K562 (cell line): ENCODE measurements at regions of chr1 and their contacts with region 1.

Region 1: GRCh38 chr1:244302889-244303613 is 148.7 kb downstream of the ADSS2 start:
- DNase-seq: peak; percentile 85 to 97 (median 87)
- ATAC-seq: peak; percentile 81
- H3K4me3 ChIP-seq: no peak overlapping the region
- H3K27ac ChIP-seq: peak overlapping the region; percentile 90
- H3K4me1 ChIP-seq: peaks cover 29 to 52% of the 10 kb centered on the region in 2 experiments
- H3K27me3 ChIP-seq: no peaks in the 10 kb centered on the region
- CTCF ChIP-seq: no peak; a peak in 1 of 6 replicates
- EP300 ChIP-seq: peak; percentile 98
- POLR2A ChIP-seq: no peak; the same call in 1 of the 2 replicates
- RAD21 ChIP-seq: peak in 1 of 2 experiments; percentile 36; a peak in 3 of 4 replicates

Region 2: GRCh38 chr1:243819438-243819839 is 483.6 kb before region 1 on chr1:
- CTCF ChIA-PET with region 1: no interaction called
- POLR2A ChIA-PET with region 1: no interaction called
- in situ Hi-C with region 1: no loop called
- intact Hi-C with region 1: no loop called
- DNase-seq: peak in 1 of 4 experiments; percentile 3
- ATAC-seq: no peak
- H3K4me3 ChIP-seq: no peak overlapping the region
- H3K27ac ChIP-seq: no peak overlapping the region
- H3K4me1 ChIP-seq: no peaks in the 10 kb centered on the region
- H3K27me3 ChIP-seq: no peaks in the 10 kb centered on the region
- CTCF ChIP-seq: no peak
- EP300 ChIP-seq: no peak
- POLR2A ChIP-seq: no peak
- RAD21 ChIP-seq: no peak

Region 3: DNA sequence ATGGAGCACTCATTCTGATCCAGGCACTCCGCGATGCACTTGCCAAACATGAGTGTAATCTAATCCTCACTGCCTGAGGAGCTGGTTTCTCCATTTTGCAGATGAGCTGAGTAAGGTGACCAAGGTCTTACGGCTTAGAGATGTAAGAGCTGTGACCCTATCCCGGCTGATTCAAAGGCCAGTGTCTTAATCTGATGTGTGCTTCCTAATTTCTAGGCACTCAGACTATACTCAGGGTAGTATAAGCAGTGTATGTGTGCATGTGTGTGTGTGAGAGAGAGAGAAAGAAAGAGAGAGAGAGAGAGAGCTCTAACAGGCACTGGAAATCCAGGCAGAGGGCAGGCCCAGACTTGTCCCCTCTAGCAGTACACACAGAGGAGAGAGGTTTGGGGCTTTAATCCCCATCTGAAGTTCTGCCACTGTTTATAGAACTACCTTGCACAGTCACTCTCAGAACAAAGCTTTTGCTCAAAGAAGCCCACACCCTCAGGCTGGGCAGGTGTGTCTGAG is 63.7 kb before region 1 on chr1:
- CTCF ChIA-PET with region 1: no interaction called
- POLR2A ChIA-PET with region 1: no interaction called
- in situ Hi-C with region 1: no loop called
- intact Hi-C with region 1: no loop called
- DNase-seq: no peak
- ATAC-seq: no peak
- H3K4me3 ChIP-seq: no peak overlapping the region
- H3K27ac ChIP-seq: no peak overlapping the region
- H3K4me1 ChIP-seq: peaks cover 0 to under 1% of the 10 kb centered on the region in 2 experiments; a peak in 1 of 5 replicates
- H3K27me3 ChIP-seq: peaks cover 29 to 44% of the 10 kb centered on the region in 2 experiments; a peak in 4 of 5 replicates
- CTCF ChIP-seq: no peak
- EP300 ChIP-seq: no peak
- POLR2A ChIP-seq: no peak
- RAD21 ChIP-seq: no peak

Region 4: DNA sequence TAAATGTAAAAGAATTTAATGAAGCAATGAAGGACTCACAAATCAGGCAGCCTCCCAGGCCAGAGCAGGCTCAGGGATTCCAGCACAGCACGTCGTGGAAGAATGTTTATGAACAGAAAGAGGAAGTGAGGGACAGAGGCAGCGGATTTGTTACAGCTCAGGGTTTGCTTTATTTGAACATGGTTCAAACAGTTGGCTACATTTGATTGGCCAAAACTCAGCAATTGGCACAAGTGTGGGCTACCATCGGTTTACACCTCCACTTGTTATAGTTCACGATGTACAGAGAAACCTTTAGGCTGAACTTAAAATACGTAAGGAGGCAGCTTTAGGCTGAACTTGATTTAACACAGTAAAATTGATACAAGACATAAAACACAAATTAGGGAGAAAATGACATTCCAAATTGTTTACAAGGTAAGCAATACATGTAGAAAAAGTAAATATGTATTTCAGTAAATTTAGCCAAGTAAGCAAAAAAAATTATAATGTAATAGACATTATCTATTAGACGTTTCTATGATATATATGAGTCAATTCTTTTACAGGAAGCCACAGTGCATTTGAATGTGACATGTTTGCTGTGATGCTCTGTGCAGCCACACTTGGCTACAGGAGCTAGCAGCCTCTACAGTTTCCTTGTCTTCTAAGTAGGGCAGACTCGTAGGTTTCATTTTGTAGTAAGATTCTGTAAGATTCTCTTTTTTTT is 22.2 kb after region 1 on chr1:
- CTCF ChIA-PET with region 1: no interaction called
- POLR2A ChIA-PET with region 1: interaction called, 5 read pairs
- in situ Hi-C with region 1: no loop called
- intact Hi-C with region 1: loop called (anchors 2 kb)
- DNase-seq: peak in 1 of 4 experiments; percentile 69
- ATAC-seq: peak; percentile 74
- H3K4me3 ChIP-seq: no peak overlapping the region
- H3K27ac ChIP-seq: peak overlapping the region; percentile 42
- H3K4me1 ChIP-seq: peaks cover 3 to 41% of the 10 kb centered on the region in 2 experiments; a peak in 4 of 5 replicates
- H3K27me3 ChIP-seq: no peaks in the 10 kb centered on the region
- CTCF ChIP-seq: no peak
- EP300 ChIP-seq: no peak
- POLR2A ChIP-seq: no peak
- RAD21 ChIP-seq: no peak

Region 5: GRCh38 chr1:244353551-244354091 is 50.6 kb after region 1 on chr1:
- CTCF ChIA-PET with region 1: no interaction called
- POLR2A ChIA-PET with region 1: no interaction called
- in situ Hi-C with region 1: no loop called
- intact Hi-C with region 1: loop called (anchors 2 kb)
- DNase-seq: peak; percentile 73 to 92 (median 80)
- ATAC-seq: peak; percentile 83
- H3K4me3 ChIP-seq: no peak overlapping the region
- H3K27ac ChIP-seq: peak overlapping the region; percentile 71
- H3K4me1 ChIP-seq: peaks cover 20 to 47% of the 10 kb centered on the region in 2 experiments
- H3K27me3 ChIP-seq: no peaks in the 10 kb centered on the region
- CTCF ChIP-seq: no peak
- EP300 ChIP-seq: peak; percentile 75
- POLR2A ChIP-seq: peak; percentile 52
- RAD21 ChIP-seq: peak in 1 of 2 experiments; percentile 32; a peak in 2 of 4 replicates

Region 6: GRCh38 chr1:244371242-244372141 is 68.4 kb after region 1 on chr1:
- CTCF ChIA-PET with region 1: interaction called, 3 read pairs
- POLR2A ChIA-PET with region 1: no interaction called
- in situ Hi-C with region 1: no loop called
- intact Hi-C with region 1: loop called (anchors 1 kb)
- DNase-seq: no peak
- ATAC-seq: no peak
- H3K4me3 ChIP-seq: no peak overlapping the region
- H3K27ac ChIP-seq: no peak overlapping the region
- H3K4me1 ChIP-seq: peaks cover 31 to 41% of the 10 kb centered on the region in 2 experiments
- H3K27me3 ChIP-seq: no peaks in the 10 kb centered on the region
- CTCF ChIP-seq: no peak
- EP300 ChIP-seq: no peak
- POLR2A ChIP-seq: no peak
- RAD21 ChIP-seq: no peak

Region 7: DNA sequence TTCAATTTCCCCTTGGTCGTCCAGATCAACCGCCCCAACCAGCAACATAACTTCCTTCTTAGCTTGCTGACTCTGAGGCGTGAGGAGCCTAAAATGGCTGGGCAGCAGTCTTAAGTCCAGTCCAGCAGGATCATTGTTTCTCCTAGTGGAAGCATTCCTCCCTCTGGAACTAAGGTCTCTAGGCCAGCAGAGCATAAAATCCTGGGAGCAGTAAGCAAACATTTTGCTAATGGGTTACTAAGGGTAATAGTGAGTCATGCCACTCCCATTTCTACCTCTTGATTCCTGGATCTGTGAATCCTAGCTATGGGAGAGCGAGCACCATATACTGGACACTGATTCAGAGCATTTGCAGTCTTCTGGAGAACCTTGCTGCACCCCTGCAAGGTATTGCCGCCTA is 88.7 kb after region 1 on chr1:
- CTCF ChIA-PET with region 1: no interaction called
- POLR2A ChIA-PET with region 1: no interaction called
- in situ Hi-C with region 1: no loop called
- intact Hi-C with region 1: loop called (anchors 1 kb)
- DNase-seq: no peak
- ATAC-seq: no peak
- H3K4me3 ChIP-seq: no peak overlapping the region
- H3K27ac ChIP-seq: no peak overlapping the region
- H3K4me1 ChIP-seq: peaks cover 12 to 17% of the 10 kb centered on the region in 2 experiments; a peak in 4 of 5 replicates
- H3K27me3 ChIP-seq: no peaks in the 10 kb centered on the region
- CTCF ChIP-seq: no peak
- EP300 ChIP-seq: no peak
- POLR2A ChIP-seq: no peak
- RAD21 ChIP-seq: no peak